ENCODE measurements at regions of chr10 and their contacts with region 1.

Region 1: GRCh38 chr10:70233109-70233938 is at the start of gene PPA1:
- DNase-seq: peak; percentile 100

Region 2: DNA sequence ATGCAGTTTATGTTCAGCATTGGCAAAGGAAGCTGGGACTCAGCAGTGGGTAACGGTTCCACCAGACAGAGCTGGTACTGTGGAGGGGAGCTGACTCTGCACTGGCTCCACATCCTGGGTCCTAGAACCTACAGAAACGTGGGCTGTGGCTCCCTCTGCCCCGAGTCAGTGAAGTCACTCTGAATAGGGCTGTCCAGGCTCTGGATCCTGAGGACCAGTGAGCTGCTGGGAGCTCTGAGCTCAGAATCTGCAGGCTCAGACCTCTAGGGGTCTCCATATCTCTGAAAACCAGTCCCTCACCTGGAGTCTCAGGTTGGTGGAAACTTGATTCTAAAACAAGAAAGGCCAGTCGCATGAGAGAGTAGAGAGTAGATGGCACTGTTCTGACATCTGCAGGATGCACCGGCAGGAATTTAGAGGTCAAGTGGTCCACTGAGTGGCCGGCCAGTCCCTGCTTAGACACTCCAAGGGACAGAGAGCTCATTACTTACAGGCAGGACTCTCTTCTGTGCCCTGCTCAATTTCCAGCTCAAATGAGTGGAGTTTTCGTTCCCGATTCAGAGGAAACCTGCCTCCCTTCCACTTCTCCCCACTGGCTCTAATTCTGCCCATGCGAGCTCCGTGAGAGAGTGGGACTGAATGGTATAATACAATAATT is 31.8 kb after region 1 on chr10:
- CTCF ChIA-PET with region 1: no interaction called
- POLR2A ChIA-PET with region 1: interaction called, 12 read pairs
- DNase-seq: peak; percentile 53

Measured in HEK293T (cell line).